HCT116 (cell line): ENCODE measurements at regions of chr5 and their contacts with region 1.

Region 1: DNA sequence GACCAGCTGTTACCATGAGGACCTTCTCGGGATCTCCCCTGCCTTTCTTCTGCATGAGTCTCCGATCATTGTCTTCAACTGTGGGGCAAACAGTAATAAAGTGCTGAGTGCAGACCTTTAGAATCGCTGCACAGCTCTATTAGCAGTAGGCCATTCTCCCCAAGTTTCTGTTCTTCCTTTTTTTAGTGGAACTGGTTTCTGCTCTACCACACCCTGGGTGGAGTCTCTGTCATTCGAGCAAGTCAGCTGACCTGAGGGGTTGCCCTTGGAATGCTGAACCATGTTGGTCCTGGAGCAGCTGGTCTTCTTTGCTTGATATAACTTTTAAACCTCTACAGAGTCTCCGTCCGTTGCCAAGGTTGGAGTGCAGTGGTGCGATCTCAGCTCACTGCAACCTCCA is 33.4 kb upstream of the GNPDA1 start:
- DNase-seq: no peak
- ATAC-seq: no peak
- H3K4me3 ChIP-seq: no peak overlapping the region
- H3K27ac ChIP-seq: no peak overlapping the region
- H3K4me1 ChIP-seq: no peaks in the 10 kb centered on the region; a peak in 1 of 4 replicates
- H3K27me3 ChIP-seq: no peaks in the 10 kb centered on the region
- CTCF ChIP-seq: no peak
- POLR2A ChIP-seq: no peak
- RAD21 ChIP-seq: no peak

Region 2: GRCh38 chr5:141672848-141673813 is 373.1 kb before region 1 on chr5:
- CTCF ChIA-PET with region 1: no interaction called
- POLR2A ChIA-PET with region 1: no interaction called
- RAD21 ChIA-PET with region 1: no interaction called
- intact Hi-C with region 1: no loop called
- DNase-seq: no peak
- ATAC-seq: no peak
- H3K4me3 ChIP-seq: no peak overlapping the region
- H3K27ac ChIP-seq: no peak overlapping the region
- H3K4me1 ChIP-seq: no peaks in the 10 kb centered on the region
- H3K27me3 ChIP-seq: no peaks in the 10 kb centered on the region
- CTCF ChIP-seq: no peak
- POLR2A ChIP-seq: no peak
- RAD21 ChIP-seq: no peak

Region 3: GRCh38 chr5:141910271-141910673 is 135.9 kb before region 1 on chr5:
- CTCF ChIA-PET with region 1: no interaction called
- POLR2A ChIA-PET with region 1: no interaction called
- RAD21 ChIA-PET with region 1: no interaction called
- intact Hi-C with region 1: no loop called
- DNase-seq: no peak
- ATAC-seq: no peak
- H3K4me3 ChIP-seq: no peak overlapping the region
- H3K27ac ChIP-seq: no peak overlapping the region
- H3K4me1 ChIP-seq: peaks cover 0 to 7% of the 10 kb centered on the region in 2 experiments; a peak in 1 of 4 replicates
- H3K27me3 ChIP-seq: no peaks in the 10 kb centered on the region
- CTCF ChIP-seq: no peak
- POLR2A ChIP-seq: no peak
- RAD21 ChIP-seq: no peak

Region 4: GRCh38 chr5:142087920-142088679 is 41.9 kb after region 1 on chr5:
- CTCF ChIA-PET with region 1: no interaction called
- POLR2A ChIA-PET with region 1: no interaction called
- RAD21 ChIA-PET with region 1: no interaction called
- intact Hi-C with region 1: loop called (anchors 1 kb)
- DNase-seq: no peak
- ATAC-seq: no peak
- H3K4me3 ChIP-seq: no peak overlapping the region
- H3K27ac ChIP-seq: no peak overlapping the region
- H3K4me1 ChIP-seq: peaks cover 3 to 11% of the 10 kb centered on the region in 2 experiments; a peak in 3 of 4 replicates
- H3K27me3 ChIP-seq: no peaks in the 10 kb centered on the region
- CTCF ChIP-seq: no peak
- POLR2A ChIP-seq: no peak
- RAD21 ChIP-seq: no peak